Calu3 (cell line): ENCODE measurements at regions of chr5 and their contacts with region 1.

Region 1: DNA sequence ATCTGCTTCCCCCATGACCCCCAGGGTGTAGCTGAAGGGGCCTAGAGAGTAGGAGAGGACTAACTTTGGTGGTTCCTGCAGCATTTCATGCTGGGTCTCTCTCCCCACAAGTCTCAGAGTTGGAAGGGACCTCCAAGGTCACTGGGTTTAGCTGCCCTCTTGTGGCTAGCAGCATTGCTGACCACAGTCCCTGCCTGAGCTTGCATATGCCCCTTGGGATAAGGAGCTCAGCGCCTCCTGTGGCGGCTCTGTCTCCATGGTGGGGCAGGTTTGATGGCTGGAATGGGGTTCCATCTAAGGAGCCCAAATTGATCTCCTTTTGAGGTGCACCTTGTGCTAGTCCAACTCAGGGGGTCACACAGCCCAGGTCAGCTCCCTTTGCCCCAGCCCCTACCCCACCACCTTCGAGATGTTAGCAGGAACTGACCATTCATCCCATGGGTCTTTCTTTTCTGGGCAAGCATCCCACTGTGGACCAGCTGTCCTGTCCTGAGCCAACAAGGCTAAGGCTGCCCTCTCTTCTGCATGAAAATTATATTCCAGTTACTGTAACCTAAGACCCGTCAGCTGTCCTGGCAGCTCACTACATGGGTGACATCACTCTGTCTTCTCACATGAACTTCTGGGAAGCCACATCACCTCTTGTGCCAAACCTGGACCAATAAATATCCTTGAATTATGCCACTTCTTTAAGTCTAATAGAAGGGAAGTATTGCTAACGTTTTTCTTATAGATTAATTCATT is 196.2 kb downstream of the HSPA4 start:
- DNase-seq: peak; percentile 76
- H3K4me3 Mint-ChIP-seq: no peak overlapping the region
- H3K27ac Mint-ChIP-seq: no peak overlapping the region
- H3K4me1 Mint-ChIP-seq: peaks cover 41% of the 10 kb centered on the region
- H3K27me3 Mint-ChIP-seq: peaks cover under 1% of the 10 kb centered on the region
- CTCF ChIP-seq: peak; percentile 80

Region 2: GRCh38 chr5:133287500-133287899 is 39.4 kb after region 1 on chr5:
- CTCF ChIA-PET with region 1: interaction called, 11 read pairs
- intact Hi-C with region 1: loop called (anchors 5 kb)
- DNase-seq: peak; percentile 80
- H3K4me3 Mint-ChIP-seq: no peak overlapping the region
- H3K27ac Mint-ChIP-seq: no peak overlapping the region
- H3K4me1 Mint-ChIP-seq: no peaks in the 10 kb centered on the region
- H3K27me3 Mint-ChIP-seq: peaks cover 14% of the 10 kb centered on the region
- CTCF ChIP-seq: peak; percentile 61